ENCODE measurements at regions of chr21 and their contacts with region 1.

Region 1: GRCh38 chr21:42666023-42666747 is 12.8 kb downstream of the PDE9A start:
- DNase-seq: peak; percentile 87
- H3K4me3 ChIP-seq: no peak overlapping the region
- H3K27ac ChIP-seq: peak overlapping the region; percentile 5 to 81 (median 80)
- H3K4me1 ChIP-seq: peaks cover 0 to 78% (median 76%) of the 10 kb centered on the region in 4 donors
- H3K27me3 ChIP-seq: no peaks in the 10 kb centered on the region
- CTCF ChIP-seq: no peak
- EP300 ChIP-seq: no peak
- POLR2A ChIP-seq: no peak

Region 2: GRCh38 chr21:42679319-42680260 is 13.4 kb after region 1 on chr21:
- intact Hi-C with region 1: loop called (anchors 1 kb)
- DNase-seq: no peak
- H3K4me3 ChIP-seq: no peak overlapping the region
- H3K27ac ChIP-seq: no peak overlapping the region
- H3K4me1 ChIP-seq: peaks cover 0 to 57% (median 41%) of the 10 kb centered on the region in 4 donors
- H3K27me3 ChIP-seq: no peaks in the 10 kb centered on the region
- CTCF ChIP-seq: no peak
- EP300 ChIP-seq: no peak
- POLR2A ChIP-seq: no peak

Region 3: DNA sequence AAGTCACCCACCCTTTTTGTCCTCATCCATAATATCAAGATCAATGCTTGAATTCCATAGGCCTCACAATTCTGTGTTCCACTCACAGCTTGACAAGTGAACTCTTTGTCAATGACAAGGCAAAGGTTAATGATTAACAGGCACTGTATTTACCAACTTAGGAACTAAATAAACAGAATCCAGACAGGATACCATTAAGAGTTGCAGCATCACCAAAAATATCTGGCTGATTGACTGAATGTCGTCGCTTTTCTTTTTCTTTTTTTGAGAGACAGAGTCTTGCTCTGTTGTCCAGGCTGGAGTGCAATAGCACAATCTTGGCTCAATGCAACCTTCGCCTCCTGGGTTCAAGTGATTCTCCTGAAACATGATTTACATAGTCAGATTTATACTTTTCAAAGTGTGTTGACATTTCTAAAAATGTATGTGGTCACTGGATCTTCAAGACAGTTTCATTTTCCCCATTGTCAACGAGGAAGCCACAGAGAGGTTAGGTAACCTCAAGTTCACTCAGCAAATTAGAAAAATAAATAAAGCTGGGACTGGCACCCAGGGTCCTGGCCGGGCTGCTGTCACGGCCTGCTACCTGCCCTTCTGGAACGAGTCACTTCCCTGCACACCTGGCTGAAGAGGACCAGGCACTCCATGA is 68.3 kb after region 1 on chr21:
- intact Hi-C with region 1: loop called (anchors 5 kb)
- DNase-seq: peak; percentile 12
- H3K4me3 ChIP-seq: no peak overlapping the region
- H3K27ac ChIP-seq: peak overlapping the region in 2 of 4 donors; percentile 81 to 83
- H3K4me1 ChIP-seq: peaks cover 0 to 54% (median 31%) of the 10 kb centered on the region in 4 donors
- H3K27me3 ChIP-seq: no peaks in the 10 kb centered on the region
- CTCF ChIP-seq: no peak
- EP300 ChIP-seq: no peak
- POLR2A ChIP-seq: no peak

Region 4: GRCh38 chr21:42781150-42781970 is 115.2 kb after region 1 on chr21:
- intact Hi-C with region 1: no loop called
- DNase-seq: no peak
- H3K4me3 ChIP-seq: peak overlapping the region in 3 of 4 donors; percentile 14 to 43 (median 27)
- H3K27ac ChIP-seq: peak overlapping the region in 3 of 4 donors; percentile 8 to 31 (median 14)
- H3K4me1 ChIP-seq: peaks cover 0 to 15% (median 5%) of the 10 kb centered on the region in 4 donors
- H3K27me3 ChIP-seq: peaks cover 0 to 33% (median 4%) of the 10 kb centered on the region in 3 donors
- CTCF ChIP-seq: no peak
- EP300 ChIP-seq: no peak
- POLR2A ChIP-seq: no peak